ENCODE measurements at regions of chr3 and their contacts with region 1.

Region 1: GRCh38 chr3:187679638-187680396 is 9.6 kb upstream of the SST start:
- DNase-seq: peak; percentile 64 to 79
- ATAC-seq: peak; percentile 60 to 87 (median 70)
- H3K4me3 ChIP-seq: no peak overlapping the region
- H3K4me3 Mint-ChIP-seq: no peak overlapping the region
- H3K27ac ChIP-seq: no peak overlapping the region
- H3K27ac Mint-ChIP-seq: no peak overlapping the region
- H3K4me1 ChIP-seq: no peaks in the 10 kb centered on the region
- H3K4me1 Mint-ChIP-seq: peaks cover 5% of the 10 kb centered on the region in 2 donors
- H3K27me3 ChIP-seq: no peaks in the 10 kb centered on the region
- H3K27me3 Mint-ChIP-seq: peaks cover 20 to 37% of the 10 kb centered on the region in 2 donors
- CTCF ChIP-seq: peak; percentile 89

Region 2: DNA sequence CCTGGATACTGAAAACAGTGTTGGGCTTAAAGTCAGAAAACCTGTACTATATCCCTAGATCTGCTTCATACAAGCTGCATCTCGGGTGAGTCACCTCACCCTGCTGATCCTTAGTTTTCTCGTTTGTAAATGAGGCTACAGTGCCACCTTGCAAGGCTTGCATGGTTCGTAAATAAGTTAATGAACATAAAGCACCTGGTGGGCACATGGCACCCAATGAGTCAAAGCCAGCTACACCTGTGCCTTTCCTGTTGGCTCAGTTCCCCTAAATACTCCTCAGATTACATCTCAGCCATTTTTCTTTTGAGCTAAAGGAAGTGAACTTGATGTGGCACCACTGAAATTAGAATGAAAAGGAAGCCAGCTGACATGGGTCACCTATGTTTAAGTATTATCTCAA is 456.0 kb before region 1 on chr3:
- intact Hi-C with region 1: loop called (anchors 2 kb)
- DNase-seq: no peak
- ATAC-seq: no peak
- H3K4me3 ChIP-seq: no peak overlapping the region
- H3K4me3 Mint-ChIP-seq: no peak overlapping the region
- H3K27ac ChIP-seq: no peak overlapping the region
- H3K27ac Mint-ChIP-seq: no peak overlapping the region
- H3K4me1 ChIP-seq: no peaks in the 10 kb centered on the region
- H3K4me1 Mint-ChIP-seq: no peaks in the 10 kb centered on the region
- H3K27me3 ChIP-seq: no peaks in the 10 kb centered on the region
- H3K27me3 Mint-ChIP-seq: peaks cover 6 to 15% of the 10 kb centered on the region in 2 donors
- CTCF ChIP-seq: no peak

Region 3: GRCh38 chr3:187319699-187320302 is 360.0 kb before region 1 on chr3:
- intact Hi-C with region 1: loop called (anchors 1 kb)
- DNase-seq: peak; percentile 29 to 68
- ATAC-seq: peak; percentile 72 to 83 (median 80)
- H3K4me3 ChIP-seq: no peak overlapping the region
- H3K4me3 Mint-ChIP-seq: no peak overlapping the region
- H3K27ac ChIP-seq: no peak overlapping the region
- H3K27ac Mint-ChIP-seq: no peak overlapping the region
- H3K4me1 ChIP-seq: peaks cover 12% of the 10 kb centered on the region
- H3K4me1 Mint-ChIP-seq: peaks cover 11 to 14% of the 10 kb centered on the region in 2 donors
- H3K27me3 ChIP-seq: peaks cover 2% of the 10 kb centered on the region
- H3K27me3 Mint-ChIP-seq: peaks cover 18 to 26% of the 10 kb centered on the region in 2 donors
- CTCF ChIP-seq: peak; percentile 62

Region 4: GRCh38 chr3:187616307-187616972 is 63.4 kb before region 1 on chr3:
- intact Hi-C with region 1: loop called (anchors 1 kb)
- DNase-seq: peak; percentile 36 to 69
- ATAC-seq: peak; percentile 80 to 87 (median 81)
- H3K4me3 ChIP-seq: no peak overlapping the region
- H3K4me3 Mint-ChIP-seq: no peak overlapping the region
- H3K27ac ChIP-seq: no peak overlapping the region
- H3K27ac Mint-ChIP-seq: no peak overlapping the region
- H3K4me1 ChIP-seq: no peaks in the 10 kb centered on the region
- H3K4me1 Mint-ChIP-seq: peaks cover 8 to 13% of the 10 kb centered on the region in 2 donors
- H3K27me3 ChIP-seq: no peaks in the 10 kb centered on the region
- H3K27me3 Mint-ChIP-seq: peaks cover under 1 to 4% of the 10 kb centered on the region in 2 donors
- CTCF ChIP-seq: peak; percentile 77